PC-9 (cell line): ENCODE measurements at regions of chr5 and their contacts with region 1.

Region 1: GRCh38 chr5:39714036-39714698 is 289.4 kb upstream of the DAB2 start:
- DNase-seq: peak; percentile 63 to 74
- H3K4me3 ChIP-seq: no peak overlapping the region
- H3K27ac ChIP-seq: peak overlapping the region; percentile 60
- H3K4me1 ChIP-seq: peaks cover 8% of the 10 kb centered on the region; the same call in 1 of the 2 replicates
- H3K27me3 ChIP-seq: no peaks in the 10 kb centered on the region
- CTCF ChIP-seq: peak; percentile 87

Region 2: GRCh38 chr5:38382898-38383297 is 1331.3 kb before region 1 on chr5:
- CTCF ChIA-PET with region 1: no interaction called
- POLR2A ChIA-PET with region 1: no interaction called
- intact Hi-C with region 1: no loop called
- DNase-seq: peak; percentile 58 to 77
- H3K4me3 ChIP-seq: no peak overlapping the region
- H3K27ac ChIP-seq: no peak overlapping the region
- H3K4me1 ChIP-seq: no peaks in the 10 kb centered on the region
- H3K27me3 ChIP-seq: peaks cover 37% of the 10 kb centered on the region
- CTCF ChIP-seq: peak; percentile 88

Region 3: GRCh38 chr5:39376293-39376714 is 337.9 kb before region 1 on chr5:
- CTCF ChIA-PET with region 1: no interaction called
- POLR2A ChIA-PET with region 1: no interaction called
- intact Hi-C with region 1: loop called (anchors 10 kb)
- DNase-seq: peak; percentile 63 to 66
- H3K4me3 ChIP-seq: no peak overlapping the region
- H3K27ac ChIP-seq: no peak overlapping the region
- H3K4me1 ChIP-seq: no peaks in the 10 kb centered on the region
- H3K27me3 ChIP-seq: no peaks in the 10 kb centered on the region
- CTCF ChIP-seq: peak; percentile 96

Region 4: DNA sequence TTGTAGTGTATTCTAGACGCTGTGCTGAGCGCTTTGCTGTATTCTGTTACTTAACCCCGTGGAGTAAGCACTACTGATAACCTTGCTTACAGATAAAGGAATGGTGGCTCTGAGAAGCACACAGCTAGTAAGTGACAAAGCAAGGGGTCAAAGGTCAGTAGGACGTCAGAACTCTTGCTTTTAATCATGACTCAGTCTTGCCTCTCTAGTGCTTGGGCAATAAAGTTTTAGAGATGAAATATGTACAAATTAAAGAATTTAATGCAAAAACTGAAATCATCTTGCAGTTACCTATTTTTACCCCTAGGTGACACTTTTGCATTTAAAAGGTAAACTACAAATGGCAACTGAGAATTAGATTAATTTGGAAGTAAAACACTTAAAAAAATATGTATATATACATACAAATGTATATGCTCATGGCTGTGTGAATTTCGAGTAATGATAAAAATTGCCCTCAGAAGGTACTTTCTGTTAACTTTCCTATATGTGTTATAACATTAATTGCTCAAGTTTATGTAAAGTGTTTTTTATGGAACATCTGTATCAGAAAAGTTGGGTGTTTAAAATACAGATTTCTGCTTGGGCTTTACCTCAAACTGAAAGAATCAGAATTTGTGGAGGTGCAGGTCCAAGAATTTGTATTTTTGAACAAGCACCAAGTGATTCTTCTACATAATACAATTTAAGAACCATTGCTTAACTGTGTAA is 114.3 kb before region 1 on chr5:
- CTCF ChIA-PET with region 1: interaction called, 3 read pairs
- POLR2A ChIA-PET with region 1: interaction called, 17 read pairs
- intact Hi-C with region 1: loop called (anchors 1 kb)
- DNase-seq: peak in 1 of 2 experiments; percentile 63
- H3K4me3 ChIP-seq: no peak overlapping the region
- H3K27ac ChIP-seq: no peak overlapping the region
- H3K4me1 ChIP-seq: peaks cover 12% of the 10 kb centered on the region
- H3K27me3 ChIP-seq: no peaks in the 10 kb centered on the region
- CTCF ChIP-seq: peak; percentile 85

Region 5: DNA sequence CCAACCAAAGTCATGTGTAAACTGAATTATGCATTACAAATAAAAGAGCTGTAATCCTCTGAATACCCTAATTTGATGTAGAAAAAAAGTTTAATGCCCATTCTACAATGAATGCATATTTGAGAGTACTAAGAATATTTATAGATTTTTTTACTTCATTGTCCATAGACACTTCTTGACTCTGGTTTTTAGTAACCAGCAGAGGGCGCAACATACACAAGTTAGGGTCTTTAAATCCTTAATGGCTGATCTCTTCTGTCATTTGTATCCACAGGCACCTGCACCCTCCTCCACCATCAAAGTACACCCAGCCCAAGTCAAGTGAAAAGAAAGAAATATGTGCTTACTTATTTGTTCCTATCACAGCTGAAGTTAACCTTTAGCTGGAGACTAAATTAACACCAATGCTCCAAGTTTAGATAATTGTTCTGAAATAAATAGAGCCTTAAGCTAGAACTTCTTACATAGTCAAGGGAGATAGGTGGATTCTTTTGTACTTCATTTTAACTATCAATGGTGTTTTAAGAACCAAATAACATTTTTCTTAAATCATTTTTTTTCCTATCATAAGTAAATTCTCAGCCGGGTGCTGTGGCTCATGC is 234.8 kb after region 1 on chr5:
- CTCF ChIA-PET with region 1: interaction called, 3 read pairs
- POLR2A ChIA-PET with region 1: no interaction called
- intact Hi-C with region 1: loop called (anchors 1 kb)
- DNase-seq: peak; percentile 56 to 66
- H3K4me3 ChIP-seq: no peak overlapping the region
- H3K27ac ChIP-seq: no peak overlapping the region
- H3K4me1 ChIP-seq: no peaks in the 10 kb centered on the region
- H3K27me3 ChIP-seq: no peaks in the 10 kb centered on the region
- CTCF ChIP-seq: peak; percentile 96

Region 6: DNA sequence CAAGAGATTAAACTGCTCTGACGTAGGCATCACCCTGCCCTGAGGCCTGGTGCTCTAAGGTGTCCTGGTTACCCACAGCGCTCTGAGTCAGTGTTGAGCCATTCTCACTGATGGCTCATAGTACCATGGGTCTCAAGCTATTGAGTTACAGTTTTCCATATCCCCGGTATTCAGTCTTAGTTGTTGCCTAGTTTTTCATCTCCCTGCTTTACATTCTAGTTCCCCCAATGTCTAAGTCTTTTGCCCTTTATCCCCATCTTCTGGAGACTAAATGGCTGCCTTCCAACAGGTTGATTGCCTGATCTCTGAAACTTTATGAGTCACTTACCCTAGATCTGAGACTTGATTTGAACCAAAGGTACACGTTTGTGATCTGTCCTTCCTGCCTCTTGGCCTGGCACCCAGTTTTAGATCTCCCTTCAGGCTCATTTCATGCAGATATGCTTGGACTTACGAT is 804.4 kb after region 1 on chr5:
- CTCF ChIA-PET with region 1: no interaction called
- POLR2A ChIA-PET with region 1: no interaction called
- intact Hi-C with region 1: loop called (anchors 1 kb)
- DNase-seq: peak; percentile 96 to 98
- H3K4me3 ChIP-seq: no peak overlapping the region
- H3K27ac ChIP-seq: peak overlapping the region; percentile 84
- H3K4me1 ChIP-seq: peaks cover 33% of the 10 kb centered on the region
- H3K27me3 ChIP-seq: no peaks in the 10 kb centered on the region
- CTCF ChIP-seq: no peak

Region 7: GRCh38 chr5:40879163-40879942 is 1165.2 kb after region 1 on chr5:
- CTCF ChIA-PET with region 1: no interaction called
- POLR2A ChIA-PET with region 1: no interaction called
- intact Hi-C with region 1: loop called (anchors 1 kb)
- DNase-seq: peak; percentile 6 to 47
- H3K4me3 ChIP-seq: no peak overlapping the region
- H3K27ac ChIP-seq: no peak overlapping the region
- H3K4me1 ChIP-seq: no peaks in the 10 kb centered on the region
- H3K27me3 ChIP-seq: no peaks in the 10 kb centered on the region
- CTCF ChIP-seq: peak; percentile 90